Activated CD4-positive, alpha-beta memory T cell treated with anti-CD3 and anti-CD28 coated beads for 36 hours (primary cell): ENCODE measurements at regions of chrX and their contacts with region 1.

Region 1: DNA sequence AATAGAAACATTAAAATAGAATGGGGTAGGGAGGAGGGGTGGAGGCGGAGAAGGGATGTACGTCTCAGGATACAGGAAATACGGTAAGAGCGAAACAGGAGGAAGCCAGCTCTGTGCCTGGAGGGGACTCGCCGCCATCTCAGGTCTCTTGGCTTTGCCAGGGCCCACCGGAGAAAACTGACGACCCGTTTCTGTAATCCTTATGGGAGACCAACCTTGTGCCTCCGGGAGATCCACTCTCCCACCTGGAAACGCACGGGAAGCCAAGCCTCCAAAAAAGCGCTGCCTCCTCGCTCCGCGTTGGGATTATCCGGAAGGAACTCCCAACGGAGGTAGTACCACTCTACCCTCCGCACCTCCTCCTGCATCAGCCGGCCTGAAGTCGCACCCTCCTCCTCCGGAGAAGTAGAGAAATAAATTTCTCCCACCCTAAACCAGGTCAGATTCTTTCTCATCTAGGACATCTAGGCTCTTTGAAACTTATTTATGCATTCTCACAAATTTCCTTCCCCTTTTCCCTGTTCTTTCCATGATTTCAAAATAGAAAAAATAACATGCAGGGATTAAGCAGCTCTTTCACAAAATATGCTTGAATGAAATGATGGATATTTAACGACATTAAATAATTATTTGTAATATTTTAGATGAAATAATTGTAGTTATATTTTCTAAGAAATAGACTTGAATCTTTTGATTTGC is at the start of gene NBDY:
- DNase-seq: peak; percentile 45
- H3K4me3 Mint-ChIP-seq: peak within 1 kb of the TSS; percentile 82
- H3K27ac Mint-ChIP-seq: peak within 1 kb of the TSS; percentile 87
- H3K4me1 Mint-ChIP-seq: peaks cover 24% of the 10 kb centered on the region
- H3K27me3 Mint-ChIP-seq: no peaks in the 10 kb centered on the region
- total RNA-seq, gene NBDY: 45.1 to 50.0 TPM

Region 2: GRCh38 chrX:54808605-54809483 is 1920.5 kb before region 1 on chrX:
- CTCF ChIA-PET with region 1: no interaction called
- POLR2A ChIA-PET with region 1: no interaction called
- intact Hi-C with region 1: loop called (anchors 5 kb)
- DNase-seq: peak; percentile 94
- H3K4me3 Mint-ChIP-seq: peak overlapping the region; percentile 90
- H3K27ac Mint-ChIP-seq: peak overlapping the region; percentile 90
- H3K4me1 Mint-ChIP-seq: peaks cover 13% of the 10 kb centered on the region
- H3K27me3 Mint-ChIP-seq: peaks cover 2% of the 10 kb centered on the region

Region 3: GRCh38 chrX:56107273-56107672 is 622.0 kb before region 1 on chrX:
- CTCF ChIA-PET with region 1: no interaction called
- POLR2A ChIA-PET with region 1: no interaction called
- intact Hi-C with region 1: no loop called
- DNase-seq: no peak
- H3K4me3 Mint-ChIP-seq: no peak overlapping the region
- H3K27ac Mint-ChIP-seq: no peak overlapping the region
- H3K4me1 Mint-ChIP-seq: no peaks in the 10 kb centered on the region
- H3K27me3 Mint-ChIP-seq: no peaks in the 10 kb centered on the region

Region 4: DNA sequence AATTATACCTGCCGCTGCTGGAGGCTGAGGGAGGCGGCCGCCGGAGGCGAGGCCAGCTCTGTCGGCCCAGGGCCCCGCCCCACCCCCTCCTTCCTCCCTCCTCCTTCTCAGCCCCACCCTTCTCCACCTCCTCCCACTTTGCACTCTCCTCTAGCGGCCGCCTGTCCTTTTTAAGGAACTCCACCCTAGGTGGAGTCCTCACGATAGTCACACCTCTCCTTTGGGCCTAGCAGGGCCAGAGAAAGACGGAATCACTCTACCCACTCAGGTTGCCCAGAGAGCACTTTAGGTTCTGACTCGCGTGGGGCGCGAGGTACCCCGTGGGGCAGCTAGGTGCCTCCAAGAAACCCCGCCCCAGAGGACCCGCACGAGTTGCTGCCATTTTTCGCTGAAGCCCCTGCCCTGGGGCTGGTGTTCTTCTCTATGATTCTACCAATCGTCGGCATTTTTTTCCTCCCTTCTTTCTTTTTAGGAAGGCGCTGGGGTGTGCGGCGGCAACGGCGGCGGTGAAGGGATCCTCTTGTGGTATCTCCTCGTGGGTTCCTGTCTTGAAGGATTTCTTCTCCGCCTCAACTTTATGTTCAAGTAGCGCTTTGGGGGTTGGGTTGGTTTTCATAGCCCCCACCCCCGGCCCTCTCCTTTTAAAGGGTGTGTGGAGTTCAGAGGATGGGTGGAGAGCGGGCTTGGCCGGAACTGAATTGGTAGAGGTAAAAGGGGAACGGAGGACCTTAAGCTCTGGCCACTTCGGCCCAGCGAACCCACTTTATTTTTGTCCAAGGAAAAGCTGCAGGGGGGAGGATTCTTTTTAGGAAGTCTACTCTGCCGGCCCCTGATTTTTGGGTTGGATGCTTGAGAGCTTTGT is 496.8 kb before region 1 on chrX and contains the start of gene KLF8:
- CTCF ChIA-PET with region 1: interaction called, 4 read pairs
- POLR2A ChIA-PET with region 1: interaction called, 7 read pairs
- intact Hi-C with region 1: loop called (anchors 5 kb)
- DNase-seq: peak; percentile 61
- H3K4me3 Mint-ChIP-seq: peak within 1 kb of the TSS; percentile 72
- H3K27ac Mint-ChIP-seq: no peak within 1 kb of the TSS
- H3K4me1 Mint-ChIP-seq: peaks cover 12% of the 10 kb centered on the region
- H3K27me3 Mint-ChIP-seq: no peaks in the 10 kb centered on the region
- total RNA-seq, gene KLF8: 3.2 to 4.4 TPM

Region 5: DNA sequence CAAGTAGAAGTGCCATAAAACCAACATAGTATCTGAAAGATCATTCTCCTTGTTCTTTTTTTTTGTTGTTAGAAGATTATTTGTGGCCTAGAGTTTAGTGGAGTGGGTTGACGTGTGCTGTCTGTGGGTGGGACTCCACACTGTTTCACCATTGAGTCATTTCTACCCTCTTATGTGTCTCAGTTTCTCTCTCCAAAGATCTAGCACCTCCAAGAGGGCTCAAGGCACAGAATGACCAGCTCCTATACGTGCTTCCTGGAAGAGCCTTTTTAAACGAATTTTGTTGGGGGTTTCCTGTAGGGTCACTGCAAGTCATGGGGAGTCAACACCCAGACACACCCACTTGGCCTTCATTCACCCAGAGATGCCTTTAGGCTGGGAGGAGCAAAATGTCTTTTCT is 347.0 kb before region 1 on chrX:
- CTCF ChIA-PET with region 1: no interaction called
- POLR2A ChIA-PET with region 1: no interaction called
- intact Hi-C with region 1: loop called (anchors 5 kb)
- DNase-seq: peak; percentile 55
- H3K4me3 Mint-ChIP-seq: peak overlapping the region; percentile 24
- H3K27ac Mint-ChIP-seq: peak overlapping the region; percentile 86
- H3K4me1 Mint-ChIP-seq: peaks cover 43% of the 10 kb centered on the region
- H3K27me3 Mint-ChIP-seq: no peaks in the 10 kb centered on the region

Region 6: DNA sequence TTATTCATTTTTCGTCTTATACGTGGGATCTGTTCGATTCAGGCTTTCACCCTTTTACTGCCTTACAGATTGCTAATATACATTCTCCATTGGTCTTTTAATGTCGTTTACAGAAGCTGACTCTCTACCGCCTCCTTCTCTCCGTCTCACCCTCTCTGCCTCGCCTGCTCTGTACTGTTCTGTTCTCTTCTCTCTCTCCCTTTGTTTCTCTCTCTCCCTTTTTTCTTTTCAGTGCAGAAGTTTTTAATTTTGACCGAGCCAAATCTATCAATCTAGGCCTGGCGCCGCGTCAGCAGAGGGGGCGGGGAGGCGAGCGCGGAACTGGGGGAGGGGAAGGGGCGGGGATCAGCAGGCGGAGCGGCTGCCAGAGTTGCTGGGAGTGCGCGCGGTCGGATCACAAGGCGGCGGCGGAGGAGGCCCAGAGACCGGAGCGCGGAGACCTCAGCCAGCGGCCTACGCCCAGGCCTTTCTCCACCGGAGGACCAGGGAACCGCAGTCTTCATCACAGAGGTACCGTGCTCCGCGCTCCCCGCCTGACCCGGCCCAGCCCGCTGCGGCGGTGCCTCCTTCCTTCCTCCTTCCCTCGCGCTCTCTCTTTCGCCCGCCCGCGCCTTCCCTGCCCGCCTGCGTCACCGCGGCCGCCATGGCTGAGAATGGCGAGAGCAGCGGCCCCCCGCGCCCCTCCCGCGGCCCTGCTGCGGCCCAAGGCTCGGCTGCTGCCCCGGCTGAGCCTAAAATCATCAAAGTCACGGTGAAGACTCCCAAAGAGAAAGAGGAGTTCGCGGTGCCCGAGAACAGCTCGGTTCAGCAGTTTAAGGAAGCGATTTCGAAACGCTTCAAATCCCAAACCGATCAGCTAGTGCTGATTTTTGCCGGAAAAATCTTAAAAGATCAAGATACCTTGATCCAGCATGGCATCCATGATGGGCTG is 165.8 kb before region 1 on chrX and contains the start of gene UBQLN2:
- CTCF ChIA-PET with region 1: interaction called, 4 read pairs
- POLR2A ChIA-PET with region 1: interaction called, 11 read pairs
- intact Hi-C with region 1: loop called (anchors 2 kb)
- DNase-seq: peak; percentile 87
- H3K4me3 Mint-ChIP-seq: peak within 1 kb of the TSS; percentile 86
- H3K27ac Mint-ChIP-seq: peak within 1 kb of the TSS; percentile 98
- H3K4me1 Mint-ChIP-seq: peaks cover 3% of the 10 kb centered on the region
- H3K27me3 Mint-ChIP-seq: no peaks in the 10 kb centered on the region
- total RNA-seq, gene UBQLN2: 52.0 to 52.2 TPM

Region 7: DNA sequence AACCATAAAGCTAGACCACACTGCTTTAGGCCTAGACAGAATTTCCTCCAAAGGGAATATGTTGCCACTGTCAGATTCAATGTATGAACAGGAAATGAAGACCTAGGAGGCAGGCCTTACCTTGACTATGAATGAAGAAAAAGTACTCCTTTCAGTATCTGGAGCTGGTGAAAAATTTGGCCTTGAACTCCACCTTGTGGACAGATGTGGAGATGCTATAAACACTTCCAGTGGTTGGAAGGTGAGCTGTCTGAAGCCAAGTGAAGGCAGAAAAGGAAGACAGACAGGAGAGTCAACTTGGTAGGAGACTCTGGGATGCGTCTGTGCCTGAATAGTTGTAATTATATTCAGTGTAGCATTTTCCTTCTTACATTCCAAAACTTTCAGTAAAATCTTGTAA is 248.9 kb after region 1 on chrX:
- CTCF ChIA-PET with region 1: interaction called, 8 read pairs
- POLR2A ChIA-PET with region 1: no interaction called
- intact Hi-C with region 1: loop called (anchors 10 kb)
- DNase-seq: peak; percentile 40
- H3K4me3 Mint-ChIP-seq: no peak overlapping the region
- H3K27ac Mint-ChIP-seq: no peak overlapping the region
- H3K4me1 Mint-ChIP-seq: no peaks in the 10 kb centered on the region
- H3K27me3 Mint-ChIP-seq: no peaks in the 10 kb centered on the region